ENCODE measurements at regions of chr14 and their contacts with region 1.

Region 1: DNA sequence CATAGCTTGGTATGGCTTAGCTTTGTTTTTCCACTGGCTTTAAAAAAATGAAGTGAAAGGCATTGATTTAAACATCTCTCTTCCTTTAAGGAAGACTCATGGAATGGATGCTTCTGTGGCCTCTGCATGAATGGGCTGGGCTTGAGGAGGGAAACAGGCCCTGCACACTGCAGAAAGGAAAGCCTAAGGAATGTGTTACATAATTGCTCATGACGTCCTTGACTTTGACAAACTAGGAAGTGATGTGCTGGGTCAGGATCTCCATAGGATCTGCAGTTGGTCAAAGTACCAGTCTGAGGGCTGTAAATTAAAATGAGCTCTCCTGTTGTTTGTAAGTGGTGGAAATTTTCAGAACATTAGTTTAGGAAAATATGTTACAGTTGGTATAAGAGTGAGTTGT is 12.7 kb downstream of the SAMD4A start:
- DNase-seq: peak in 1 of 2 donors; percentile 42
- H3K4me3 ChIP-seq: no peak overlapping the region
- H3K27ac ChIP-seq: peak overlapping the region in 1 of 5 donors; percentile 60
- H3K4me1 ChIP-seq: peaks cover 0 to 32% (median 11%) of the 10 kb centered on the region in 4 donors
- H3K27me3 ChIP-seq: no peaks in the 10 kb centered on the region
- CTCF ChIP-seq: no peak
- EP300 ChIP-seq: no peak
- POLR2A ChIP-seq: no peak

Region 2: GRCh38 chr14:54509546-54510501 is 69.8 kb before region 1 on chr14 and contains the start of gene CGRRF1:
- intact Hi-C with region 1: no loop called
- DNase-seq: peak; percentile 98 to 99
- H3K4me3 ChIP-seq: peak within 1 kb of the TSS; percentile 81 to 96 (median 92)
- H3K27ac ChIP-seq: peak within 1 kb of the TSS; percentile 75 to 91 (median 80)
- H3K4me1 ChIP-seq: peaks cover 12 to 39% (median 26%) of the 10 kb centered on the region in 4 donors
- H3K27me3 ChIP-seq: no peaks in the 10 kb centered on the region
- CTCF ChIP-seq: peak in 5 of 7 experiments; percentile 8 to 91 (median 78)
- EP300 ChIP-seq: no peak
- POLR2A ChIP-seq: peak in 1 of 4 donors; percentile 13
- total RNA-seq, gene CGRRF1: 8.0 to 30.9 (median 19.1) TPM

Region 3: DNA sequence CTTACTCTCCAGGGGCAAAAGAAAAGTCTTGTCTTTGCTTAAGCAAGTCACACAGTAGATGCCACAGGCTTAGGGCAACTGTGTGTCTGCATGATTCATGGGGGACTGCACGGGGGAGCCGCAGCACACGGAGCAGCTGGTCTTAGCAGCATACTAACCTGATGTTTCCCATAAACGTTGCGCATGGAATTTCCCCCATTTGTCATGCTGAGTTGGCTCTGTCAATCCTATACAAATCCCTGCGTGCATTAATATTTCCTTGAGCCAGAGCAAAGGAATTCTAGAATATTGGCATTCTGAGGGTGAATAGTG is 58.5 kb after region 1 on chr14:
- intact Hi-C with region 1: loop called (anchors 10 kb)
- DNase-seq: peak in 1 of 2 donors; percentile 73
- H3K4me3 ChIP-seq: no peak overlapping the region
- H3K27ac ChIP-seq: no peak overlapping the region
- H3K4me1 ChIP-seq: peaks cover 0 to 20% (median 10%) of the 10 kb centered on the region in 4 donors
- H3K27me3 ChIP-seq: no peaks in the 10 kb centered on the region
- CTCF ChIP-seq: no peak
- EP300 ChIP-seq: no peak
- POLR2A ChIP-seq: no peak

Measured in stomach (tissue), 19 donors.